Left ventricle myocardium superior (tissue), 1 donor: ENCODE measurements at regions of chr7 and their contacts with region 1.

Region 1: DNA sequence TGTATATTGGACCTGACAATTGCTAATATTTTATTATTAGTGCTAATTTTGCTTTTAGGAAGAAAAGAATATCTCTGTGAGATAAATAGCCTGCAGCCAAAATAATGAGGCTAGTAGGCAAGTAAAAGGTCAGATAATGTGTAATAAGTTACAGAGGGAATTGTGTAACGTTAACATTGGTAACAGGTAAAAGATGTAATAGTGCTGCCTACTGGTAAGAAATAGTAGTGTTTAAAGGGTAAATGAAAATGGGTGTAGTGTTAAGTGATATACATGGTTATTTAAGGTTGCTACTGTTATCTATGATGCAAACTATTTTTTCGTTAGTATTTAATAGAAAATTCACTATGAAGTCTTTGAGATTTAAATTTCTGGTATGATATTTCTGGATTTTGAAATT is 9.2 kb upstream of the FOXP2 start:
- DNase-seq: no peak
- ATAC-seq: no peak

Region 2: DNA sequence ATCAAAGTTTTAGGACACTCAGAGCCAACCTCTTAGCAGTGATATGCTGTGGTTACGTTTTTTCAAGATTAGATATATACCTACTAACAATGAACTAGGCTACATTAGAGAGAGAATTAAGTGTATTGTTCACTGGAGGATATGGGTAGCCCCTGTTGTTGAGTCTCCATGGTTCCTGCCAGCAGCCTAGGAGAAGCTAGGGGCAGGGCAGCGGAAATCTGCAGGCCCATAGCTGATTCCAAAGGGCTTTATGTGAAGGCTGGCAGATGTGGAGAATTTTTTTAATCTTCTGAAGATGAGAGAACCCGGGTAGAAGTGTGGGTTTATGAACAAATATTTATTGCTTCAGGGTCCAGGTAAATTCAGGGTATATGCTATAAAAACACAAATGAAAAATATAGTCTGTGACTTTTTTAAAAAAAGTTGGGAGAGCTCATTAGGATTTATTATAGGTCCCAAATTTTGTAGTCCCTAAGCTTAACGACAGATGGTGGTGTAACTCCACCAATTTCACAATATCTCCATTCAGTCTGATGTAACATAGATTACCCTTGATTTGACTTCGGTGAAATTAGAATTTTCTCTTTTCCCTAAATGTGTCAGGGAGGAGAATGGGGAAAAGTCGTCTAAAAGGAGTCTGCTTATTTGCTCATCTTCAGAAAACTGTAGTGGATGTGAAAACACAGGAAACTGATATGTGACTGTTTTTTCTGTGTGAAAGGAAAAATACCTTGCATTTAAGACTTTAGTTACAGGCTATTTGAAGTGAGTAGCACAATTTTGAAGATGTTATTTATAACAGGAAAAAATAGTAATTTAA is 323.6 kb before region 1 on chr7:
- intact Hi-C with region 1: loop called (anchors 5 kb)
- DNase-seq: no peak
- ATAC-seq: no peak